MCF 10A (cell line): ENCODE measurements at regions of chr11 and their contacts with region 1.

Region 1: DNA sequence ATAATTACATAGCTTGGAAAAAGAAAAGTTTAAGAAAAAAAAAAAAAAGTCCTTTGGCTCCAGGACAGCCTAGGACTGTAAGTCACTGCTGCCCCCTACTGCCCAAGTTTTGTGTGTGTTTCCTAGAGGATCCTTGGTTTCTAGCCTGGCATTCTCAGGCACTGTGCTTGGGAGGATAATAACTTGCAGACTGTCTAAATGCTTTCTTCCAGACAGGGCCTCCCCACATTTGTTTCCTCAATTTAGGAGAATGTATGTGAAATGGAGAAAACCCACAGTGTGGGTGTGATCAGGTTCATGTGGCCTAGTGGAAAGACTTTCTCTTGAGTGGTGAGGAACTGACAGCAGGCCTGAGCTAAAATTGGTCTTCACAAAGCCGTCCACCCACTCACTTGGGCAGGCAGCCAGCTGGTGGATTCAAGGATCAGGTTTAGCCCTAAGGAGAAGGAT is 191.0 kb downstream of the NAV2 start:
- DNase-seq: peak; percentile 80
- H3K4me3 Mint-ChIP-seq: no peak overlapping the region
- H3K27ac Mint-ChIP-seq: no peak overlapping the region
- H3K4me1 Mint-ChIP-seq: no peaks in the 10 kb centered on the region
- H3K27me3 Mint-ChIP-seq: no peaks in the 10 kb centered on the region
- CTCF ChIP-seq: peak; percentile 85

Region 2: DNA sequence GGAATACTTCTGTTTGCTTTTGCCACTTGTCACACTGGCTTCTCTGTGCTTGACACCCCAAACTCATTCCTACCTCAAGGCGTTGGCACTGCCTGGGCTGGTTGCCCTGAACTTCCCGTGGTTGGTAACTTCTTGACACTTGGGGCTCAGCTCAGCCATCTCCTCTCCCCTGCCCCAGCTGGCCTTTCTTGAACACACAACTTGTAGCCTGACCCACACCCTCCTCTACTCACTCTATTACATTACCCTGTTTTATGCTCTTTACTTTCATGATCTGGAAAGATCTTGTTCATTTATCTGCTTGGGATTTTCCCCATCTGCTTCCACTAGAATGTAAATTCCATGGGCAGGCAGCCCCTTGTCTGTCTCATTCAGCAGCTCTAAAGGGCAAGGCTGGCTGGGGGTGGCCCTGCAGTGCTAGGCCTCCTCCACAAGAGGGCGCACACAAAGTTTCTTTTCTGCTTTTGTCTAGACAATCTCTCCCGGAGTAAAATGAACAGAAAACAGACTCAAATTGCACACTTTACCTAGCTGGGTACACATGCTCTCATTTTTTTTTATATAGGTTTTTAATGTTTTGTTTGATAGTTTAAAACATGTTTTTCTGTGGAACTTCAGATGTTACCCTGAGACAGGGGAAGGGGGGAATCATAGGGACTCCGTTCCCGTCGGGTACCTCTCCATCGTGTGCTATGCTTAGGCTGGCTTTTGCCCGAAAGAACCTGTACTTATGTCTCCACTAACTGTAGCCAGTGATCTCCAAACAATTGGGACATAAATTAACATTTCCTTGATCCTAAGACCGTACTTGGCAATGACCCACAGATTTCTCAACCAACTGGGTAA is 826.7 kb before region 1 on chr11:
- CTCF ChIA-PET with region 1: interaction called, 11 read pairs
- POLR2A ChIA-PET with region 1: no interaction called
- intact Hi-C with region 1: no loop called
- DNase-seq: peak; percentile 69
- H3K4me3 Mint-ChIP-seq: no peak overlapping the region
- H3K27ac Mint-ChIP-seq: no peak overlapping the region
- H3K4me1 Mint-ChIP-seq: peaks cover 21% of the 10 kb centered on the region
- H3K27me3 Mint-ChIP-seq: peaks cover 21% of the 10 kb centered on the region
- CTCF ChIP-seq: peak; percentile 94

Region 3: DNA sequence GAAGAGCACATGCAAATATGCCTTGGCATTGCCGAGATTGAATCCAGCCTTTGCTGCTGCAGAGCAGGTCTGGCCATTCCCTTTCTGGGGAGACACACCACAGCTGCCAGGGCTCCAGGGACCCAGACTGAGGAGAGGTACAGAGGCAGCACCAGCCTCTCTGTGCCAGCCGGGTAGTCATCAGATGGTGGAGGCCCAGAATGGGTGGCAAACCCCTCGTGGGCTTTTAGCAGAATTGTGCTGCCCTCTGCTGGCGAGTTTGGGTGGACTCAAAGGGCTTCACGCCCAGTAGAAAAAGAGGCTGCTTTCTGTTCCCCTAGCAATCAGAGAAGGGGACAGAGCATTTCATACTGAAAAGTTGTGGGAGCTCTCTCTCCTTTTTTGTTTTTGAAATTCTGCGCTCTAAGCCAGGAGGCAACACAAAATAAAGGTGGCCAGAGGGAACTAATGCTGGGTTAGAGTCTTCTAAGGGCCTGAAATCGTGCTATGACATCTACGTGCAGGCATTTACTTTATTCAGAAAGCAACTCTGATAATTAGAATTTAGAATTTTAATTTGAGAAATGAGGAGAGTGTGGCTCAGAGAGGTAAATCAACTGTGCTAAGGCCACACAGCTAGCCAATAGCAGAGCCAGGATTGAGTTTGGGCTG is 349.8 kb before region 1 on chr11:
- CTCF ChIA-PET with region 1: interaction called, 322 read pairs
- POLR2A ChIA-PET with region 1: no interaction called
- intact Hi-C with region 1: loop called (anchors 1 kb)
- DNase-seq: peak; percentile 85
- H3K4me3 Mint-ChIP-seq: no peak overlapping the region
- H3K27ac Mint-ChIP-seq: no peak overlapping the region
- H3K4me1 Mint-ChIP-seq: no peaks in the 10 kb centered on the region
- H3K27me3 Mint-ChIP-seq: peaks cover 52% of the 10 kb centered on the region
- CTCF ChIP-seq: peak; percentile 88

Region 4: GRCh38 chr11:19735157-19735908 is 168.3 kb before region 1 on chr11:
- CTCF ChIA-PET with region 1: interaction called, 16 read pairs
- POLR2A ChIA-PET with region 1: no interaction called
- intact Hi-C with region 1: no loop called
- DNase-seq: no peak
- H3K4me3 Mint-ChIP-seq: no peak overlapping the region
- H3K27ac Mint-ChIP-seq: no peak overlapping the region
- H3K4me1 Mint-ChIP-seq: peaks cover 9% of the 10 kb centered on the region
- H3K27me3 Mint-ChIP-seq: no peaks in the 10 kb centered on the region
- CTCF ChIP-seq: no peak

Region 5: GRCh38 chr11:19800162-19800561 is 103.5 kb before region 1 on chr11:
- CTCF ChIA-PET with region 1: interaction called, 5 read pairs
- POLR2A ChIA-PET with region 1: interaction called, 3 read pairs
- intact Hi-C with region 1: loop called (anchors 5 kb)
- DNase-seq: peak; percentile 27
- H3K4me3 Mint-ChIP-seq: no peak overlapping the region
- H3K27ac Mint-ChIP-seq: peak overlapping the region; percentile 8
- H3K4me1 Mint-ChIP-seq: peaks cover 27% of the 10 kb centered on the region
- H3K27me3 Mint-ChIP-seq: no peaks in the 10 kb centered on the region
- CTCF ChIP-seq: no peak

Region 6: DNA sequence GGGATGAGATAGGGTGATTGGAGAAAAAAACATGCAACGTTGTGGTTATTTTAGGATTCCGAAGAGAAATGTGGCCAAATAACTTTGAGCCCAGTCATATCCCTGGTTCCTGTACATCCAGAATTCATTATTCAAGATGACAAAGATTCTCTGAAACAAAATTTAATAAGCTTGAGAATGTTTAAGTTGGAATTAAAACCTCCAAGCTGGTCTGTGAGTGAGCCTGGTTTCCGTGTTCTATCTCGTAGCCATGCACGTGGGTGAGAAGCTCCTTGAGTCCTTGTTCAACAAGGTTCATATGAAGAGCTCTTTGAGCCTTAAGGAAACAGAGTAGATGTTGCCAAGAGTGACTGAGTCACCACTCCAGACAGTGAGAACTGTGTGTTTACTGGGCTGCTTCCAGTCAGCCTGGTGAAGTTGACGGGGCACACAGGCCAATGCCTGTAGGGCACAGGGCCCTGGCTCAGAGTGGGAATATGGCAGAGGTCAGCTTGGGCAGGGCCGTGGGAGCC is 15.5 kb after region 1 on chr11:
- CTCF ChIA-PET with region 1: interaction called, 64 read pairs
- POLR2A ChIA-PET with region 1: interaction called, 4 read pairs
- intact Hi-C with region 1: no loop called
- DNase-seq: peak; percentile 98
- H3K4me3 Mint-ChIP-seq: peak overlapping the region; percentile 63
- H3K27ac Mint-ChIP-seq: peak overlapping the region; percentile 94
- H3K4me1 Mint-ChIP-seq: peaks cover 32% of the 10 kb centered on the region
- H3K27me3 Mint-ChIP-seq: no peaks in the 10 kb centered on the region
- CTCF ChIP-seq: no peak

Region 7: DNA sequence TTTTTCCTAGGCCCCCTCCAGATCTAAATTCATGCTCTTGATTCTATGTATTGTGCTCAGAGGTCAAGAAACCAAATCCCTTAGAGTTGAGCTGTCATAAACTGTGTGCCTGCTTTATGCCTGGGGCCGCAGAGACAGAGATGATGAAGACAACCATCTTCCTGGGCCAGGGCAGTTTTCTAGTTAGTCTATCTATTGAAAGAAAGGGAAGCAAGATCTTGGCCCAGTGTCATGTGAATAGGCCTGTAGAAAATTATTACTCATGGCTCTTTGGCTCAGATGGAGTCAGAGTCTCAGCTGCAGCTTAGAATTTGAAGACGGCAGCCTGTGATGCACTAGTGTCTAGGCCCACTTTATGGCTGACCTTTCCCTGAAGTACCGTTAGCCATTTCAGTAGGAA is 144.6 kb after region 1 on chr11:
- CTCF ChIA-PET with region 1: no interaction called
- POLR2A ChIA-PET with region 1: no interaction called
- intact Hi-C with region 1: no loop called
- DNase-seq: no peak
- H3K4me3 Mint-ChIP-seq: no peak overlapping the region
- H3K27ac Mint-ChIP-seq: peak overlapping the region; percentile 93
- H3K4me1 Mint-ChIP-seq: peaks cover 56% of the 10 kb centered on the region
- H3K27me3 Mint-ChIP-seq: no peaks in the 10 kb centered on the region
- CTCF ChIP-seq: no peak

Region 8: DNA sequence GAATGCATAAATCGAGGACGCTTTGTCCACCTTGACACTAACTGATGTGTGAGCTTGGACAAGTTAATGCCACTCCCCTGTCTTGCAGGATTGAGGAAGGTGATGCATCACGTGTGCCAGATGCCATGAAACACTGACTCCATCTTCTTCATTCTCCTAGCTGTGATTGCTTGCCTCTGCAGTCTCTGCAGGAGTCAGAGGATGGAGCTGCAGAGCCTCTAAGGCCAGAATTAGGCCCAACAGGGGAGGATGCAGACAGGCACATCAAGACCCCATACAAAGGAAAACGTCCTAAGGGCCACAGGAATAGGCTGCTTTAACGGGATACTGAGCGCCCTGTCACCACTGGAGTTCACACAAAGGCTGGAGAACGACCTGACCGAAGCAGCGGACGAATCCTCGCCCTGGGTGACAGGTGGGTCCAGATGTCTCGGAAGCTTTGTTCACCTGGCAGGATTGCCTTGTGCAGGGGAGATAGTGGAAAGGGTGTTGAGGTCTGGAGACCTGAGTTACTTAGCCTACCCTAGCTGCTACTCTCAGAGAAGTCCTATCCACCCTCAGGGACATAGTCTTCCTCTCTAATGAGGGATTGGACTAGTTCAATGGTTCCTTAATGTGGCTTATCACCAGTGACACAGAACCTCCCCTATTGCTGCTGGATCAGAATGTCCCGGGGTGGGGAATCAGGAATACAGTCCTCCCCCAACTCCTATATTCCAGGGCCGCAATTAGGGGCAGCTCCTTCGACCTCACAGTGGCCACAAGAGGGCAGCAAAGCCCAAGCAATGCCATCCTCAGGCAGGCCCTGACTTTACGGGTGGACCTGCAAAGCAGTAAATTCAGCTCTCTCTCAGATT is 224.3 kb after region 1 on chr11:
- CTCF ChIA-PET with region 1: interaction called, 84 read pairs
- POLR2A ChIA-PET with region 1: no interaction called
- intact Hi-C with region 1: loop called (anchors 1 kb)
- DNase-seq: peak; percentile 74
- H3K4me3 Mint-ChIP-seq: no peak overlapping the region
- H3K27ac Mint-ChIP-seq: peak overlapping the region; percentile 23
- H3K4me1 Mint-ChIP-seq: peaks cover 25% of the 10 kb centered on the region
- H3K27me3 Mint-ChIP-seq: no peaks in the 10 kb centered on the region
- CTCF ChIP-seq: peak; percentile 81

Region 9: GRCh38 chr11:20193307-20193706 is 289.7 kb after region 1 on chr11:
- CTCF ChIA-PET with region 1: no interaction called
- POLR2A ChIA-PET with region 1: no interaction called
- intact Hi-C with region 1: no loop called
- DNase-seq: no peak
- H3K4me3 Mint-ChIP-seq: no peak overlapping the region
- H3K27ac Mint-ChIP-seq: no peak overlapping the region
- H3K4me1 Mint-ChIP-seq: no peaks in the 10 kb centered on the region
- H3K27me3 Mint-ChIP-seq: peaks cover 35% of the 10 kb centered on the region
- CTCF ChIP-seq: no peak